ENCODE measurements at regions of chrX and their contacts with region 1.

Region 1: GRCh38 chrX:9767375-9767774 is 1.7 kb upstream of the GPR143 start:
- DNase-seq: peak; percentile 16
- H3K4me3 ChIP-seq: no peak overlapping the region
- H3K27ac ChIP-seq: peak overlapping the region; percentile 25
- H3K4me1 ChIP-seq: peaks cover 15% of the 10 kb centered on the region
- CTCF ChIP-seq: no peak

Region 2: DNA sequence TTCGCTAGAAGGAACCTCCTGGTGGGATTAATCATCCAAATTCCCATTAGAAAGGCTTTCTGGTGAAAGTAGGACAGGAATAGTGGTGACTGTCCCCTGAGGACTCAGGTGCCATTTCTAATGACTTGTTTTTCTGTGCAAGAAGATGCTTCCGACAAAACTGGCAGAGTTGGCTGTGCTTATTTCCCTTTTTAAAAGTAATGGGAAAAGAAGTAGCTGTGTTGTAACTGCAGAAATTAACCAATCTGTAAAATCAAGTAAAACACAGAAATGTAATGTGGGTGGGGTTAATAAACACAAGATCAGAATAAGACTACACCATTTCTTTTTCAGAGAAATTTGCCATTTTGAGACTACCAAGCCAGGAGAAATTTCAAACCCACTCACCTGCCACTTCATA is 678.5 kb before region 1 on chrX:
- CTCF ChIA-PET with region 1: no interaction called
- POLR2A ChIA-PET with region 1: interaction called, 10 read pairs
- intact Hi-C with region 1: no loop called
- DNase-seq: no peak
- H3K4me3 ChIP-seq: no peak overlapping the region
- H3K27ac ChIP-seq: no peak overlapping the region
- H3K4me1 ChIP-seq: no peaks in the 10 kb centered on the region
- CTCF ChIP-seq: no peak

Region 3: GRCh38 chrX:10217198-10217597 is 449.8 kb after region 1 on chrX:
- CTCF ChIA-PET with region 1: no interaction called
- POLR2A ChIA-PET with region 1: no interaction called
- intact Hi-C with region 1: no loop called
- DNase-seq: peak; percentile 21
- H3K4me3 ChIP-seq: no peak overlapping the region
- H3K27ac ChIP-seq: no peak overlapping the region
- H3K4me1 ChIP-seq: peaks cover 12% of the 10 kb centered on the region
- CTCF ChIP-seq: peak; percentile 42